ENCODE measurements at regions of chr6 and their contacts with region 1.

Region 1: DNA sequence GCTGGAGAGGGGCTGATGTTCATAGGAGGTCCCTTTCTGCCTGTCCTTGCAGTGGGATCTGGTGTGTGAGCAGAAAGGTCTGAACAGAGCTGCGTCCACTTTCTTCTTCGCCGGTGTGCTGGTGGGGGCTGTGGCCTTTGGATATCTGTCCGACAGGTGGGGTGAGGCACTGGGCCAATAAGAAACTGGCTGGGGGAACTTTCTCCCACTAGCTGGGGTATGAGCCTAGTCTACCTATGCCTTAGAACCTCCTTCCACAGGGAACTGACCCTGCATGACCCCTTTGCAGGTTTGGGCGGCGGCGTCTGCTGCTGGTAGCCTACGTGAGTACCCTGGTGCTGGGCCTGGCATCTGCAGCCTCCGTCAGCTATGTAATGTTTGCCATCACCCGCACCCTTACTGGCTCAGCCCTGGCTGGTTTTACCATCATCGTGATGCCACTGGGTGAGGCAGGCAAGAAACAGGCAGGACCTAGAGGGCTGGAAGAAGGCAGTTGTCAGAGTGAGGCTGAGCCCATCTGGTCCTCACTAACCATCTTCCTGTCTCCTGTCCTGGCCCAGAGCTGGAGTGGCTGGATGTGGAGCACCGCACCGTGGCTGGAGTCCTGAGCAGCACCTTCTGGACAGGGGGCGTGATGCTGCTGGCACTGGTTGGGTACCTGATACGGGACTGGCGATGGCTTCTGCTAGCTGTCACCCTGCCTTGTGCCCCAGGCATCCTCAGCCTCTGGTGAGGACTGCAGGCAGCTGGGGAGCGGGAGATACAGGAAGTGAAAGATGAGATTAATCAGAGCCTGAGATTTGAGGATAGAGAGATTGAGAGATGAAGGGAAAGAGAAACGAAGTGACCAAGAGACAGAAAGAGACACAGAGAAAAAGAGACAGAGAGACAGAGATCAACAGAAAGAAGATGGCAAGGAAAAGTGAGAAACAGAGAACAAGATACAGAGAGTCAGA is 1.6 kb downstream of the SLC22A7 start:
- DNase-seq: no peak
- H3K4me3 ChIP-seq: no peak overlapping the region
- CTCF ChIP-seq: no peak

Region 2: DNA sequence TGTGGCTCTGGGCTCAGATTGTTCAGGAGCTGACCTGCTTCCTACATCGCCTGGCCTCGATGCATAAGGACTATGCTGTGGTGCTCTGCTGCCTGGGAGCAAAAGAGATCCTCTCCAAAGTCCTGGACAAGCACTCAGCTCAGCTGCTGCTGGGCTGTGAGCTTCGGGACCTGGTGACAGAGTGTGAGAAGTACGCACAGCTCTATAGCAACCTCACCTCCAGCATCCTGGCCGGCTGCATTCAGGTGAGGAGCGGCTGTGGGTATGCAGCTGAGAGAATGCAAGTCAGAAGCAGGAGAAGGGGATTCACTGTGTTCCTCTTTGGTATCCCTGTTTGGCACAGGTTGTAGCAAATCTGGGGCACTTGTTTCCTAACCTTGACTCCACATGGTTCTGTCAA is 99.7 kb before region 1 on chr6:
- in situ Hi-C with region 1: loop called (anchors 5 kb)
- DNase-seq: no peak
- H3K4me3 ChIP-seq: no peak overlapping the region
- CTCF ChIP-seq: no peak